Endothelial cell of umbilical vein (primary cell): ENCODE measurements at regions of chr4 and their contacts with region 1.

Region 1: DNA sequence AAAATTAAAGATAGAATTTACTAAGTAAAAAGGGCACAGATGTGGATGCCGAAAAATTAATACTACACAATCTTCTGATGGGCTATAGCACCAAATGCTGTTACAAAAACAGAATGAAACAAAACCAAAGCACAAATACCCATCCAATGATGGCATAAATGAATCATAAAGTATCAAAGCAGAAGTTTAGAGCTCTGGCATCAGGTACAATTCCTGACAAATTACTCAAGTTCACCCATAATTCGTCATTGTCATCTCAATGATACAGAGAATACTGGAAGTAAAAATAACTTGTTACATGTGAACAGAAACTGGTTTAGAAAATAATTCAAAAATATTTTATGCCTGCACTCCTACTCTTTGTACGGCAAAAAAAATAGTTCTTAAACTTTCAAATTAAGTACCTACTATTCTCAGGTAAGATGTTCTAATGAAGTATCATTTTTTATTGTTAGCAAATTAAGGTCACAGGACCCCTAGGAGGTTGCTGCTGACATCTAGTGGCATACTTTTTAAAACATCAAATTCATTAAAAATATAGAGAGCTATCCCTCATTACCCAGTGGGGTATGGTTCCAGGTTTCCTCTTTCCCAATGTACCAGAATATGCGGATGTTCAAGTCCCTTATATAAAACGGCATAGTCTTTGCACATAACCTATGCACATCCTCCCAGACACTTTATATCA is 126.1 kb downstream of the INPP4B start:
- DNase-seq: peak; percentile 39
- H3K4me3 ChIP-seq: no peak overlapping the region
- H3K27ac ChIP-seq: no peak overlapping the region
- H3K4me1 ChIP-seq: no peaks in the 10 kb centered on the region
- H3K27me3 ChIP-seq: no peaks in the 10 kb centered on the region
- CTCF ChIP-seq: peak in 1 of 2 donors; percentile 27
- POLR2A ChIP-seq: no peak

Region 2: GRCh38 chr4:142840516-142841123 is 120.6 kb after region 1 on chr4:
- CTCF ChIA-PET with region 1: interaction called, 6 read pairs
- POLR2A ChIA-PET with region 1: no interaction called
- dilution Hi-C with region 1: no loop called
- intact Hi-C with region 1: loop called (anchors 5 kb)
- DNase-seq: peak; percentile 62
- H3K4me3 ChIP-seq: no peak overlapping the region
- H3K27ac ChIP-seq: no peak overlapping the region
- H3K4me1 ChIP-seq: no peaks in the 10 kb centered on the region
- H3K27me3 ChIP-seq: peaks cover 0 to 6% of the 10 kb centered on the region in 2 experiments
- CTCF ChIP-seq: peak; percentile 47
- POLR2A ChIP-seq: no peak